ENCODE measurements at regions of chr4 and their contacts with region 1.

Region 1: DNA sequence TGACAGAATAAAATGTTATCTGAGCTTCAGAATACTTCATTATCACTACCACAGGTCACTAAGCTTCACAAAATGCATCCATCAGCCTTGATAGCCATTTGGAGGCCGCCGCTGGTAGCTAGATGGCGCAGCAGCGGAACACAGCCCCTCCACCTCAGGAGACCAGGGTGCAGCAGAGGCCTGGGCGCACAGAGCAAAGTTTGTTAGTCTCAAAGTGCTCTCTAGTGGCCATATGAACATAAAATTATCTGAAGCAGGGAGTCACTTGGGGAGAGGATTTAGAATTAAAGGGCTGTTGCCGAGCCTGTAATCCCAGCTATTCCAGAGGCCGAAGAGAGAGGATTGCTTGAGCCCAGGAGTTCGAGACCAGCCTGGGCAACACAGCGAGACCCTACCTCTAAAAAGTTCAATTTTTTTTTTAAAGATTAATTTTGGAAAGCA is 8.1 kb upstream of the DCTD start:
- DNase-seq: peak; percentile 50
- ATAC-seq: peak; percentile 100
- H3K4me3 Mint-ChIP-seq: no peak overlapping the region
- H3K27ac Mint-ChIP-seq: no peak overlapping the region
- H3K4me1 Mint-ChIP-seq: no peaks in the 10 kb centered on the region
- H3K27me3 Mint-ChIP-seq: peaks cover 16% of the 10 kb centered on the region
- CTCF ChIP-seq: no peak

Region 2: DNA sequence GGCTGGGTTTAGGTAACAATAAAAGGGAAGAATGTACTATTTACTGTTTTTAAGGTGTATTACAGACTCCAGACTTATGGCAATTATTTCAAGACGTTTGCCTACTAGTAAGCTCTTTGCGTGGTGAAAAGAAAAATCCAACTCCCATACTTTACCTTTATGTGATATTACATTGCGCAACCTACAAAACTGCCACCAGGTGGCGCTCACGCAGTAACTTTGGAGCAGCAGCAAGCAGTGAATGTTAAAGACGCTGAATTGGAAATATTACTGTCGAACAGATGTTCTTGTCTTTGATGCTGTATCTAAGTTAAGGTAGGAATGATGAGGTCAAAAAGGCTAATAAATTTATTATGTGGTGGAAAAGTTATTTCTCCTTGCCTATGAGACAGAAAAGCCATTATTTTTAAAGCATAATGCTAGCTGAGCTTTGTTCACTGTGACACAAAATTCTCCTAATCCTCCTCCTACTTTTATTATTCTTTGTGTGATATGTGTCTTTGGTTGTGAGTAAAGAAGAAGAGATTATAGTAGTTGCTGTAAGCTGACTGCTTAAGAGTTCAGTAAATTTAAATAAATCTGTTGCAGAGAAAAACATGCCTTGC is 1782.0 kb before region 1 on chr4:
- CTCF ChIA-PET with region 1: interaction called, 5 read pairs
- POLR2A ChIA-PET with region 1: no interaction called
- intact Hi-C with region 1: loop called (anchors 1 kb)
- DNase-seq: peak; percentile 38
- ATAC-seq: peak; percentile 50
- H3K4me3 Mint-ChIP-seq: no peak overlapping the region
- H3K27ac Mint-ChIP-seq: no peak overlapping the region
- H3K4me1 Mint-ChIP-seq: no peaks in the 10 kb centered on the region
- H3K27me3 Mint-ChIP-seq: no peaks in the 10 kb centered on the region
- CTCF ChIP-seq: peak; percentile 29

Region 3: DNA sequence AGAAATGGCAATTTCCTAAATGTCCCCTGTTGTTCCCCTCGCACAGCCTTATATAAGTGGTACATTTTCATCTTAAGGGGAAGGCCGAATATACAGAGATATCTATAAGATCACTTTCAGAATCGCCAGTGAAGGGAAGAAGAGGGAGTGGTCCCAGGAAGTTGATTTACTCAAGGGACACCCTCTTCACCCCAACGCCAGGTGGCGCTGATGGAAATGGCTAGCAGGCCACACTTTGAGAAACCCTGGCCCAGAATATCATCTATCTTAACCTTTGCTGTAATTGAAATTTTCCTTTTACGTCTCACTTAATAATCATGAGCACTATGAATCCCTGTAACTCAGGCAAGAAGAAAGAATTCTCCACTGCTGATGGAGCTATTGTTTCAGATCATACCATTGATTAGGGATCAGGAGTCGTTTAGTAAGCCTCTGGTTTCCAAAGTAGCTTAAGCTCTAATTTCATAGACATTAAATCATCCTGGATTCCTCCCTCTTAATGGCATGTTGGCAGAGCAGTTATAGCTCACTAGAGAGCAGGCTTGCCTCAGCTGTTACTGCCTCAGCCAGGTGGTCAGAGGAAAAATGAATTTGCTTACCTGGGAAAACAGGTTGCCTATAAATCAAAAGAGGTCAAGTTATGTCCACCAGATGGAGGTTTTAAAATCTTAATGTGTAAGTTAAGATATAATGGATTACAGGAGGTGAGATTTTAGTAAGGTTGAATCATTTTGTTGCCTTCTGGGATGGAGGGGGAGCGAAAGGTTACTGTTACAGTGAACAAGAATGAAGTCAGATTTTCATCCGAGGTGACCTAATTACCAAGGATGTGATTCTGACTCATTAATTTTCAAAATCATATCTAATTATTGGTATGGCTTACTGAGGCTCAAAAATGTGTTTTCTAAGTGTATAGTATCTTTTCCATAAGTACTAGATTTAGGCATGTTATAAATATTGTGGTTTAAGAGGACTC is 1623.3 kb before region 1 on chr4:
- CTCF ChIA-PET with region 1: no interaction called
- POLR2A ChIA-PET with region 1: no interaction called
- intact Hi-C with region 1: loop called (anchors 10 kb)
- DNase-seq: no peak
- ATAC-seq: no peak
- H3K4me3 Mint-ChIP-seq: no peak overlapping the region
- H3K27ac Mint-ChIP-seq: no peak overlapping the region
- H3K4me1 Mint-ChIP-seq: no peaks in the 10 kb centered on the region
- H3K27me3 Mint-ChIP-seq: no peaks in the 10 kb centered on the region
- CTCF ChIP-seq: no peak

Region 4: DNA sequence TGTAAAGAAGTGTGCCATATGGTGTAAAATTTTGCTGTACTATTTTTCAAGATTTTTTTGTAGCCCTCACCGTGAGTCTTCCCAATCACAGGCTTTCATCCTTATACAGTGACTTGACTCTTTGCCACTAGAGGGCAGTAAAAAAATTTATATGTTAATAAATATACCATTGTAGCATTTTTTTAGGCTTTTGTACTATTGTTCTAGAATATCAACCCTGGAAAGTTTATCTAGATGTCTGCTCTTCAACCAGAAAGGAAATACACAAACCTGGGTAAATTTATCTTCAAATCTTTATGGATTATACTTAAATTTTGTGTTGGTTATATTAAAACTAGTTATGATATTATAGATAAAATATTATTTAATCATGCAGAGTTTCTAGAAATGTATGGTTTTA is 446.8 kb before region 1 on chr4:
- CTCF ChIA-PET with region 1: interaction called, 6 read pairs
- POLR2A ChIA-PET with region 1: no interaction called
- intact Hi-C with region 1: loop called (anchors 1 kb)
- DNase-seq: no peak
- ATAC-seq: peak; percentile 50
- H3K4me3 Mint-ChIP-seq: no peak overlapping the region
- H3K27ac Mint-ChIP-seq: no peak overlapping the region
- H3K4me1 Mint-ChIP-seq: no peaks in the 10 kb centered on the region
- H3K27me3 Mint-ChIP-seq: peaks cover 4% of the 10 kb centered on the region
- CTCF ChIP-seq: peak; percentile 12

Region 5: DNA sequence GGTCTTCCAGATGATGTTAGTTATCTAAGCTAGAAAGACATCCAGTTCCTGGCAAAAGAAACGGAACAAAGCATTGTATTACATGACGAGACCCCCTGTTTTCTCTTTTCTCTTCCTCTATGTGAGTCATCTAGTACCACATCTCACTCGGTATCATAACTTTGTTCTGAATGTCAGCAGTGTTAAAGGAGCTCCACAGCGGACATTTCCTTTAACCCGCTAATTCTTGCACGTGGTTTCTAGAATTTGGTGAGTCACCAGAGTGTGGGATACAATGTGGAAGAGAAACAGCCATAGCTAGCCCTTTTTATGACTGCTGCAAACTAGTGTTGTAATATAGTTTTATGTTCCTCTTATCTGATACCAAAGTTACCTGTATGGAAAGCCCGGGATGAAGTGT is 438.4 kb before region 1 on chr4:
- CTCF ChIA-PET with region 1: interaction called, 11 read pairs
- POLR2A ChIA-PET with region 1: no interaction called
- intact Hi-C with region 1: no loop called
- DNase-seq: no peak
- ATAC-seq: no peak
- H3K4me3 Mint-ChIP-seq: no peak overlapping the region
- H3K27ac Mint-ChIP-seq: no peak overlapping the region
- H3K4me1 Mint-ChIP-seq: no peaks in the 10 kb centered on the region
- H3K27me3 Mint-ChIP-seq: peaks cover 2% of the 10 kb centered on the region
- CTCF ChIP-seq: no peak

Region 6: DNA sequence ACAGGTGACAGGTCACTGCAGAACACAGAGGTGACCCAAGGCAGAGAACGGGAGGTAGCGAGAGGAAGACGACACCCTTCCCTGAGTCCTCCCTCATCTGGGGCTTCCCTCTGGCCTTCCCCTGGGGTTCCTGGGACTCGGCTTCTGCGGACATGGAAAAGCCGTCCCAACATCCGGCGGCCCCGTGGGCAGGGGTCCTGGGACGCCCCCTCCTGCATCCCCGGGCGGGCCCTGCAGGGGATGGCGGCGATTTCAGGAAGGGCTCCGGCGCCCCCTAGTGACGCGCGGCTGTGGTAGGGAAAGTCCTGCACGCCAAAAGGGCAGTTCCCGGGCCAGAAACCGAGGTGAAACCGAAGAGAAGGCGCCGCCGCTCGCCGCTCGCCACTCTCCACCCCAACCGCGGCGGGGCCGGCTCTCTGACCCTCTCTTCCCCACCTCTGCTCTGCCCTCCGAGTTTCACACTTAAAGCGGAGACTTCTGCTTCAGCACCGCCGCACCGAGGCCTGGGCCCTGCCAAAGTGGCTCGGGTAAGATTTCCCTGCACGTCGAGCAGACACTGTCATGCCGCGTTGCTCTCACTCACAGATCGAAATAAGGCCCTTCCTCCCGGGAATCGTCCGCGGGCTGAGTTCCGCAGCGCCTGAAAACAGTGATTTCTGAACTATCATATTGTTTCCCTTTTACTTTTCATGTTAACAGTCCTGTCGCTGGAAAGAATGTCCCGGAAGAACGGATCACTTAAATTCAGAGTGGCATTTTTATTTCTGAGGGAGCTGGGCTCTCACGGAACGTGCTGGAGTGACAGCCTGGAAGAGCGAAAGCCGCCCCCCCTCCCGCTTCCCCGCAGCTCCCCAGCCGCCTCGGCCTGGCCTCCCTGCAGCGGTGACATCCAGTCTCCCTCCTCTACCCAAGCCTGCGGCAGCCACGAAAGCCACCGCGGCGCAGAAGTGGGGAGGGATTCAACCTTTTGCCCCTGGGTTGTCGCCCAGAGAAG is 118.8 kb before region 1 on chr4:
- CTCF ChIA-PET with region 1: interaction called, 3 read pairs
- POLR2A ChIA-PET with region 1: interaction called, 4 read pairs
- intact Hi-C with region 1: loop called (anchors 2 kb)
- DNase-seq: peak; percentile 29
- ATAC-seq: peak; percentile 31
- H3K4me3 Mint-ChIP-seq: peak overlapping the region; percentile 81
- H3K27ac Mint-ChIP-seq: no peak overlapping the region
- H3K4me1 Mint-ChIP-seq: peaks cover 19% of the 10 kb centered on the region
- H3K27me3 Mint-ChIP-seq: peaks cover 15% of the 10 kb centered on the region
- CTCF ChIP-seq: no peak

Region 7: DNA sequence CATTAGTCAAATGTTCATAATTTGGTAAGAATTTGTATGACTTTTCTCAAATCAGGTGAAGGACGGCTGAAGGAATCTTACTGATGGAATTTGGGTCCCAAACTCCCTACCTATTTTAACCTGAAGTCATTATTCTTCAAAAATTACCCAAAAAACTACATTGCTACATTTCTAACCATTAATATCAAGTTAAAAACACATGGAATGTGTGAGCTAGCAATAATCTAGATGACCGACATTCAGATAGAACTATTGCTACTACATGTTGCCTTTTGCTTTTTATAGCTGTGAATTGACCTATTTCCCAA is 148.5 kb after region 1 on chr4:
- CTCF ChIA-PET with region 1: no interaction called
- POLR2A ChIA-PET with region 1: no interaction called
- intact Hi-C with region 1: no loop called
- DNase-seq: no peak
- ATAC-seq: no peak
- H3K4me3 Mint-ChIP-seq: no peak overlapping the region
- H3K27ac Mint-ChIP-seq: no peak overlapping the region
- H3K4me1 Mint-ChIP-seq: no peaks in the 10 kb centered on the region
- H3K27me3 Mint-ChIP-seq: peaks cover 7% of the 10 kb centered on the region
- CTCF ChIP-seq: peak; percentile 18

Measured in activated B cell treated with CpG ODN at 0.5 μM for 24 hours (primary cell).